GM18951 (cell line): ENCODE measurements at regions of chr9 and their contacts with region 1.

Region 1: GRCh38 chr9:3467593-3468219 is 58.1 kb downstream of the RFX3 start:
- POLR2A ChIP-seq: no peak

Region 2: DNA sequence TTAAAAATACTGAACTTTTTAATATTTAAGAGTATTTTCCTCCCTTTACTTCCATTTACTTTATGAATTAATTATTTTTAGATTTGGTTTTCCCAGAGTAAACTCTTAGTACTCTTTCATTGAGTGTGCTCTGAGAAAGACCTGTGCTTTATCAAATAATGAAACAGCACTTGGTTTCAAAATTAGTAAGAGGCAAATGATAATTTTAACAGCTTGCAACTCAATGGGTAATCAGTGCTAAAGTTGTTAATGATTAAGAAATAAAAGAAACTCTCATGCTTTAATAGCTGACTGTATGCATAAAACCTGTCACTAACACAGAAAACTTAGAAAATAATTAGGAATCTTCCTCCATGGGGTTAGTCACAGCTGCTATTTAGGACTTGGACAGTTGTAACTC is 186.3 kb before region 1 on chr9:
- in situ Hi-C with region 1: no loop called
- POLR2A ChIP-seq: no peak

Region 3: DNA sequence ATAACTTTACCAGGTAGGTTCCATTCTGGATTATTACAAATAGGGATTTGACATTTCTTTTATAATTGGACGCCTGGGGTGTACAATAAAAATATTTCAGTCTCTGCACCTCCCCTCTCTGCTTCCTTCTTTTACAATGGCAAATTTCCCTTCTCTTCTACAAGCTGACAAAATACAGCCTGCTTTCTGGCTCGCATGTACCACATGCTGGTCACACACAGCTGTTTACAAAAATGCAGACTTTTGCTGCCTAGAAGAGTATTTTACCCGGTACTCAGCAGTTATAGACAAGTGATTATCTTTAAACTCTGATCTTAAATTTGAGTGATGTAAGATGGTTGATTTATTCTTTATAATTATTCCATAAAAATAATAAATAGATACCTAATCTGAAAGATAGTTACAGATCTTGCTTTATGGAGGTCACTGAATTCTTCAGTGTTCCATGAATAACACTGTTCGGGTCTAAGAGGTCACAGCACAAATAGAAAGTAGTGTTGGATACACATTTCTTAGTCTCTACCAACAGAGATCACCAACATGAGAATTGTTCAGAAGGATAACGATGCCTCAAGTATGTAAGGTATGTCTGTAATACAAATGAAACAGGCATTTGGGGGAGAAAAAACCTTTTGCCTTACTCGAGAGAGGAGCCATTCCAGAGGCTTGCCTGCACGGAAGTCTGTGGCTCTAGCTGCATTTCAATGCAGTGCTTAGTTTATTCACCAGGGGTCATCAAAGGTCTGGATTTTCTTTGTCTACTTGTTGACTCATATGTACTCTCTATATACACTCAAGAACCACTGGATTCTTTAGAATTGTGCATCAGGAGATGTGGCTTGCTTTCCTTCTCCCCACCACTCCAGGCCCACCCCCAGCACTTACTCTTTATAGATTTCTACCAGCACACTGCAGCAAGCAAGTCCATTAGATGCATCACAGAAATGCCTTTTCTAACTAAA is 264.7 kb after region 1 on chr9:
- in situ Hi-C with region 1: loop called (anchors 25 kb)
- POLR2A ChIP-seq: no peak

Region 4: GRCh38 chr9:4117835-4118610 is 650.3 kb after region 1 on chr9:
- in situ Hi-C with region 1: loop called (anchors 25 kb)
- POLR2A ChIP-seq: no peak